Activated naive CD4-positive, alpha-beta T cell treated with anti-CD3 and anti-CD28 coated beads for 36 hours (primary cell): ENCODE measurements at regions of chr18 and their contacts with region 1.

Region 1: DNA sequence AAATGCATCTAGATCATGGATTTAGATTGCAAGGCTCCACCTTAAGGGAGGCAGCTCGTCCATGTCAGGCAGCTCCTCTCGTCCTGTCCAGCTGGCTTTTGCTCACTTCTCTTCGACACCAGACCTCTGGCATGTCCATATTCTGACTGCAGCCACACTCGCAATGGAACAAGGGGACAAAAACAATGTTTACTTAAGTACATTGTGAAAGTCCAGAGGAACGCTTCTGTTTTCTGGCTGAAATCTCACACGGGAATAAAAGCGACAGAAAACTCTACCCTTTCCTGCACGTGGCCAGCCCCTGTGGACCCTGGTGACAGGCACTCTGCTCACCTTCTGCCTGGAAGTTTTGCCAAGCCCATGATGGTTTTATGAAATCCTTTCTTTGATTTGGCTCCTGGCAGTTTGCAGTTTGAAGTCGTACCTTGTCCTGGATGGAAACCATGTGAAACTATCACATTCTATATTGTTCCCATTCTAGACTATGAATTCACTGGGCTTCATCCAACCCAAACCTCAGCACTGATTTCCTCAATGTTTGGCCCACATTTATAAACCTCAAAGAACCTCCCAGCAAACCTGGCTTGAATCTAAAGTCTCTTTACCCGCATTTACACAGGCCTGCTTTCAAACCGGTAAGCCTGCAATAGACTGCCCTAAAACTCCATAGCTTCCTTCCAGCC is 134.3 kb upstream of the PIEZO2 start:
- DNase-seq: no peak
- H3K4me3 Mint-ChIP-seq: no peak overlapping the region
- H3K27ac Mint-ChIP-seq: no peak overlapping the region
- H3K4me1 Mint-ChIP-seq: no peaks in the 10 kb centered on the region
- H3K27me3 Mint-ChIP-seq: no peaks in the 10 kb centered on the region

Region 2: DNA sequence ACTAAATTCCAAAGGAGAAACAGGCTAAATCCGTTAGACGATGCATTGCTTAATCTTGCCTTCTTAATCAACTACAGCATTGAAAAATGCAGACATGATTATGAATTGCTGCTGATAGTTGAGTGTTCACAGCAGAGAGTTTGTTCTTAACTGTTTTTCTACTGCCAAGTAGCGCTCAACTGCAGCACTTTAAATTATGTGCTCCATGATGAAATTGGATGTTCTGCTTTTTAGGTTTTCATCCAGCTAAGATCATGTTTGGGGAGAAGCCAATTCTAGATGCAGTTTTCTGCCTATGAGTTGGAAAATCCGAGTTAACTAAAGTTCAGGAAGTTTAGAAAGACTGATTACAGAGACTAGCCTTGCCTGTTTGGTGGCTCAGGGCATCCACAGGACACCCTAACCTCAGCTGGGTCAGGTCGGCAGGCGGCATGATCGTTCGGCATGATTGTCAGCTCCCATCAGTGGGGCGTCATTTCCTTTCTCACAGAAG is 14.8 kb before region 1 on chr18:
- CTCF ChIA-PET with region 1: no interaction called
- intact Hi-C with region 1: no loop called
- DNase-seq: no peak
- H3K4me3 Mint-ChIP-seq: no peak overlapping the region
- H3K27ac Mint-ChIP-seq: no peak overlapping the region
- H3K4me1 Mint-ChIP-seq: no peaks in the 10 kb centered on the region
- H3K27me3 Mint-ChIP-seq: no peaks in the 10 kb centered on the region

Region 3: GRCh38 chr18:11293794-11294193 is 10.2 kb after region 1 on chr18:
- CTCF ChIA-PET with region 1: interaction called, 12 read pairs
- intact Hi-C with region 1: no loop called
- DNase-seq: no peak
- H3K4me3 Mint-ChIP-seq: no peak overlapping the region
- H3K27ac Mint-ChIP-seq: no peak overlapping the region
- H3K4me1 Mint-ChIP-seq: no peaks in the 10 kb centered on the region
- H3K27me3 Mint-ChIP-seq: no peaks in the 10 kb centered on the region